ENCODE measurements at regions of chr1 and their contacts with region 1.

Region 1: GRCh38 chr1:243246916-243247315 is 8.2 kb downstream of the CEP170 start:
- DNase-seq: no peak
- ATAC-seq: peak; percentile 61
- H3K4me3 ChIP-seq: no peak overlapping the region
- H3K27ac ChIP-seq: no peak overlapping the region
- H3K4me1 ChIP-seq: peaks cover 8% of the 10 kb centered on the region; the same call in 1 of the 2 replicates
- H3K27me3 ChIP-seq: no peaks in the 10 kb centered on the region
- CTCF ChIP-seq: no peak
- EP300 ChIP-seq: no peak
- POLR2A ChIP-seq: no peak
- RAD21 ChIP-seq: no peak

Region 2: GRCh38 chr1:243234978-243235647 is 11.8 kb before region 1 on chr1:
- CTCF ChIA-PET with region 1: interaction called, 6 read pairs
- POLR2A ChIA-PET with region 1: interaction called, 6 read pairs
- RAD21 ChIA-PET with region 1: no interaction called
- SMC1A ChIA-PET with region 1: interaction called, 10 read pairs
- in situ Hi-C with region 1: no loop called
- intact Hi-C with region 1: no loop called
- DNase-seq: no peak
- ATAC-seq: no peak
- H3K4me3 ChIP-seq: no peak overlapping the region
- H3K27ac ChIP-seq: no peak overlapping the region
- H3K4me1 ChIP-seq: peaks cover 4% of the 10 kb centered on the region; the same call in 1 of the 2 replicates
- H3K27me3 ChIP-seq: no peaks in the 10 kb centered on the region
- CTCF ChIP-seq: no peak
- EP300 ChIP-seq: no peak
- POLR2A ChIP-seq: no peak
- RAD21 ChIP-seq: no peak

Measured in GM12878 (cell line).